Heart right ventricle (tissue), 16 donors: ENCODE measurements at regions of chr10 and their contacts with region 1.

Region 1: DNA sequence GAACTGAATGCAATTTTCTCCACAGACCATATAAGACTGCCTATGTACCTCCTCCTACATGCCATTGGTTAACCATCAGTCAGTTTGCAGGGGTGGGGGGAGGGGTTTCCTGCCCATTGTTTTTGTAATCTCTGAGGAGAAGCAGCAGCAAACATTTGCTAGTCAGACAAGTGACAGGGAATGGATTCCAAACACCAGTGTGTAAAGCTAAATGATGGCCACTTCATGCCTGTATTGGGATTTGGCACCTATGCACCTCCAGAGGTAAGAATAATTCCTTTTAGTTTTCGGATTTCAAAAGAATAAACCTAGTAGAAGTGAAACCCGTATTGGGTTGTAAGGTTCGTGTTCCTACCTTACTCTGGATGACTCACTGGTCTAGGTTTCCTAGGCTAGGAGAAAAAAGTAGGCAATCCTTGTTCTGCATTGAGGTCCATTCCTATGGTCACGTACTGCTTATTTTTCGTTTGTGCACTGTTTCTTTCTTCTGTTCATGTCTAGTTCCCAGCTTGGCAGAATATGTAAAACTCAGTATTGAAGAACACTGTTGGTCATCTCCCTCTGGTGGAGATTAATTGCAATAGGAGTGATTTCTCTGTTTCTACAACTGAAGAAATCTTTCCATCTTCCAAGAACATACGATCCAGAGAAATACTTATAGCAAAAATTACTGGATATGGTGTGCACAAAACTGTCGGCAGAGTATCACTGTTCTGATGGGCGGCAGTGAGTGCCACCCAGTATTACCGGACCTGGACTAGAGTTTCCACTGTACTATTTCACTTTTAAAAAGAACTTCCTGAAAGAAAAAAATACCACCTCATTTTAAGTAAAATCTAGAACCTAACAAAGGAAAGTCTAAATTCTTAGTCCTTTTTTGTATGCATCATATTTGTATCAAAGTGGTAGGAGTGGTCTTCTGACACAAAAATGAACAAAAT is at the start of gene AKR1C3:
- DNase-seq: peak in 1 of 2 donors; percentile 9
- ATAC-seq: peak; percentile 73 to 93 (median 88)
- H3K4me3 ChIP-seq: peak within 1 kb of the TSS; percentile 13 to 68 (median 62)
- H3K27ac ChIP-seq: peak within 1 kb of the TSS; percentile 33 to 83 (median 62)
- H3K4me1 ChIP-seq: peaks cover 0 to 23% (median 0%) of the 10 kb centered on the region in 9 donors
- H3K27me3 ChIP-seq: no peaks in the 10 kb centered on the region
- CTCF ChIP-seq: peak; percentile 57 to 84 (median 71)
- total RNA-seq, gene AKR1C3: 8.2 to 30.6 (median 18.9) TPM

Region 2: GRCh38 chr10:4813023-4813422 is 281.5 kb before region 1 on chr10:
- intact Hi-C with region 1: loop called in 1 of 10 experiments (anchors 1 kb)
- DNase-seq: no peak
- ATAC-seq: no peak
- H3K4me3 ChIP-seq: no peak overlapping the region
- H3K27ac ChIP-seq: no peak overlapping the region
- H3K4me1 ChIP-seq: peaks cover 0 to 27% (median 0%) of the 10 kb centered on the region in 9 donors
- H3K27me3 ChIP-seq: no peaks in the 10 kb centered on the region
- CTCF ChIP-seq: no peak

Region 3: DNA sequence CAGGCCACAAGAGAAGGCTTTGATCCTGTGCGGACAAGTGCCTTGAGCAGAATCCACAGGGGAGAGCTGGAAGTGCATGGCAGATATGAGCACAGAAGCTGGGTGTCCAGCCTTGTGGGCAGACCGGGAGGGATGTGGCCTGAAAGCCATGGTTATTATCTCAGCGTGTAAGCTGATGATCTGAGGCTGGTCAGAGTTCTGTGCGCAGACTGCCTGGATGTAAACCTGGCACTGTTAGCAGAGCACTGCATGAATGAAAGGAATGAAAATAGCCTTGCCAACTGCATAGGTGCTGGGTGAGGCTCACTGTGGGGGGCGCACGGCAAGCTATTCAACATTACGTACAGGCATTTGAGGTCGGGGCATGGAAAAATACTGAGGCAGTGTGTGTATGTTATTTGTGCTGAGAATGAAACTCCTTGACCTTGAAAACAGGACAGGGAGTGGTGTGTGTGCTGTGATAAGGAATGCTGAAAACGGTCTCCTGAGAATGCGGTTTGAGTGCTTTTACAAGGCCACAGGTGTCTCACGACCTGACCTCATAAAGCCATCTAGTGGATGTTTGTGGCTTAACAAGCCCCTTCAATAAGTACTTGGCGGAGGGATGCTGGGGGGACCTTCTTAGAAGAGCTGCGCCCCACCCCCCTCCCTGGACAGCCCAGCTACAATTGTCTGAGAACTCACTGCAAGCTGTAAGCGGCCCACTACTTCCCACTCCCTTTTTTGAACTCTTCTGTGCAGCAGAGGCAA is 112.6 kb before region 1 on chr10:
- intact Hi-C with region 1: loop called in 1 of 10 experiments (anchors 10 kb)
- DNase-seq: peak in 1 of 2 donors; percentile 30
- ATAC-seq: peak in 7 of 8 donors; percentile 51 to 71 (median 63)
- H3K4me3 ChIP-seq: no peak overlapping the region
- H3K27ac ChIP-seq: peak overlapping the region in 6 of 10 donors; percentile 2 to 62 (median 15)
- H3K4me1 ChIP-seq: peaks cover 4 to 27% (median 11%) of the 10 kb centered on the region in 9 donors
- H3K27me3 ChIP-seq: no peaks in the 10 kb centered on the region
- CTCF ChIP-seq: peak in 8 of 9 donors; percentile 20 to 64 (median 57)

Region 4: GRCh38 chr10:5014936-5015335 is 79.6 kb before region 1 on chr10:
- intact Hi-C with region 1: loop called in 7 of 10 experiments (anchors 5 to 10 kb)
- DNase-seq: no peak
- ATAC-seq: no peak
- H3K4me3 ChIP-seq: no peak overlapping the region
- H3K27ac ChIP-seq: no peak overlapping the region
- H3K4me1 ChIP-seq: peaks cover 0 to 30% (median 15%) of the 10 kb centered on the region in 9 donors
- H3K27me3 ChIP-seq: no peaks in the 10 kb centered on the region
- CTCF ChIP-seq: peak in 6 of 9 donors; percentile 6 to 42 (median 18)

Region 5: GRCh38 chr10:5105626-5106025 is 11.1 kb after region 1 on chr10:
- intact Hi-C with region 1: loop called in 1 of 10 experiments (anchors 1 kb)
- DNase-seq: no peak
- ATAC-seq: peak in 1 of 8 donors; percentile 75
- H3K4me3 ChIP-seq: no peak overlapping the region
- H3K27ac ChIP-seq: no peak overlapping the region
- H3K4me1 ChIP-seq: peaks cover 0 to 3% (median 0%) of the 10 kb centered on the region in 9 donors
- H3K27me3 ChIP-seq: no peaks in the 10 kb centered on the region
- CTCF ChIP-seq: no peak

Region 6: GRCh38 chr10:5283305-5284158 is 189.0 kb after region 1 on chr10:
- intact Hi-C with region 1: loop called in 5 of 10 experiments (anchors 2 to 10 kb)
- DNase-seq: peak; percentile 55 to 67
- ATAC-seq: peak; percentile 81 to 94 (median 88)
- H3K4me3 ChIP-seq: no peak overlapping the region
- H3K27ac ChIP-seq: peak overlapping the region in 1 of 10 donors; percentile 76
- H3K4me1 ChIP-seq: peaks cover 0 to 26% (median 0%) of the 10 kb centered on the region in 9 donors
- H3K27me3 ChIP-seq: peaks cover 0 to 4% (median 0%) of the 10 kb centered on the region in 7 donors
- CTCF ChIP-seq: peak; percentile 33 to 77 (median 68)

Region 7: GRCh38 chr10:5385224-5385623 is 290.7 kb after region 1 on chr10:
- intact Hi-C with region 1: loop called in 1 of 10 experiments (anchors 10 kb)
- DNase-seq: no peak
- ATAC-seq: no peak
- H3K4me3 ChIP-seq: no peak overlapping the region
- H3K27ac ChIP-seq: no peak overlapping the region
- H3K4me1 ChIP-seq: peaks cover 0 to 4% (median 0%) of the 10 kb centered on the region in 9 donors
- H3K27me3 ChIP-seq: no peaks in the 10 kb centered on the region
- CTCF ChIP-seq: no peak